ENCODE measurements at regions of chr11 and their contacts with region 1.

Region 1: GRCh38 chr11:128831174-128832120 is 35.6 kb downstream of the KCNJ1 start:
- DNase-seq: peak; percentile 84
- ATAC-seq: peak; percentile 77

Region 2: GRCh38 chr11:128039140-128040021 is 792.1 kb before region 1 on chr11:
- intact Hi-C with region 1: loop called (anchors 10 kb)
- DNase-seq: peak; percentile 71
- ATAC-seq: peak; percentile 63

Region 3: DNA sequence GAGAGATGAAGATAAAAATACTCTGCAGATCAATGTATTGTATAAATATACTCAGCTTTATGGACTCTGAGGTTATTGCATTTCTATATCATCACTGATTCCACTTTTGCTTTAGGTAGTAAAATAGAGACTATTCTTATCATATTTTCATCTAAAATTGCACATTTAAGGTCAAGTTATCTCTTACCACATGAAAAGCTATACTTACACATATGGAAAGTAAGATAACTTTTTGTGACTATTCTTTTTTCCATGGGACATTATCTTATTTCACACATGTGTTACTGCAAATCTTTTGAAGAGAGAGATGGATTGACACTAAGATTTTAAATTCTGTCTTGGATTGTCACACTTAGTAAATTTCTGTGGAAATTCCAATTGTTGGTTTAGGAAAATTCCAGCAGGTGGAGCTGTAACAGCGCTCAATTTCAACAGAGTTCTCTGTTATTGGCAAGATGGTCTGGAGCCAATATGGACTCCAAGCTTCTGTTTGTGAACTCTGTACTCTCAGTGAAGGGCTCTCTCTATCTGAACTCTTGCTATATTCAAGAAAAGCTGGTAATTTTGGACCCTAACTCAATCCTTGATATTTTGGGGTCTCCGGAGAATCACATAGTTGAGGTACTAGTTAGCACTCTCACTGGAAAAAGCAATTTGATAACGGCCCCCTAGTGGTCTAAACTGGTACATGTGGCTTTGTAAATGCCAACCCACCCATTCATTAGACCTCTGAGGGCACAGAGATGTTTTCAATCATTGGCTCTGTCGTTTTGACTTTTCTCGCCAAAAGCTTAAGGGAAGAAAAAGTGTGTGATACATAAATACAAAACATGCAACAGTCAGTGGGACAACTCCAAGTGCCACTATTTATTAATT is 673.8 kb before region 1 on chr11:
- intact Hi-C with region 1: loop called (anchors 5 kb)
- DNase-seq: no peak
- ATAC-seq: peak; percentile 69

Region 4: GRCh38 chr11:128172046-128172878 is 659.2 kb before region 1 on chr11:
- intact Hi-C with region 1: loop called (anchors 1 kb)
- DNase-seq: peak; percentile 75
- ATAC-seq: peak; percentile 76

Region 5: GRCh38 chr11:128630367-128631230 is 200.8 kb before region 1 on chr11:
- intact Hi-C with region 1: loop called (anchors 2 kb)
- DNase-seq: peak; percentile 93
- ATAC-seq: peak; percentile 95

Region 6: GRCh38 chr11:128694618-128695481 is 136.6 kb before region 1 on chr11:
- intact Hi-C with region 1: loop called (anchors 5 kb)
- DNase-seq: peak; percentile 76
- ATAC-seq: peak; percentile 18

Region 7: GRCh38 chr11:128765571-128766549 is 65.6 kb before region 1 on chr11:
- intact Hi-C with region 1: no loop called
- DNase-seq: no peak
- ATAC-seq: no peak

Region 8: GRCh38 chr11:128776424-128777284 is 54.8 kb before region 1 on chr11:
- intact Hi-C with region 1: loop called (anchors 2 kb)
- DNase-seq: peak; percentile 82
- ATAC-seq: peak; percentile 82

Region 9: DNA sequence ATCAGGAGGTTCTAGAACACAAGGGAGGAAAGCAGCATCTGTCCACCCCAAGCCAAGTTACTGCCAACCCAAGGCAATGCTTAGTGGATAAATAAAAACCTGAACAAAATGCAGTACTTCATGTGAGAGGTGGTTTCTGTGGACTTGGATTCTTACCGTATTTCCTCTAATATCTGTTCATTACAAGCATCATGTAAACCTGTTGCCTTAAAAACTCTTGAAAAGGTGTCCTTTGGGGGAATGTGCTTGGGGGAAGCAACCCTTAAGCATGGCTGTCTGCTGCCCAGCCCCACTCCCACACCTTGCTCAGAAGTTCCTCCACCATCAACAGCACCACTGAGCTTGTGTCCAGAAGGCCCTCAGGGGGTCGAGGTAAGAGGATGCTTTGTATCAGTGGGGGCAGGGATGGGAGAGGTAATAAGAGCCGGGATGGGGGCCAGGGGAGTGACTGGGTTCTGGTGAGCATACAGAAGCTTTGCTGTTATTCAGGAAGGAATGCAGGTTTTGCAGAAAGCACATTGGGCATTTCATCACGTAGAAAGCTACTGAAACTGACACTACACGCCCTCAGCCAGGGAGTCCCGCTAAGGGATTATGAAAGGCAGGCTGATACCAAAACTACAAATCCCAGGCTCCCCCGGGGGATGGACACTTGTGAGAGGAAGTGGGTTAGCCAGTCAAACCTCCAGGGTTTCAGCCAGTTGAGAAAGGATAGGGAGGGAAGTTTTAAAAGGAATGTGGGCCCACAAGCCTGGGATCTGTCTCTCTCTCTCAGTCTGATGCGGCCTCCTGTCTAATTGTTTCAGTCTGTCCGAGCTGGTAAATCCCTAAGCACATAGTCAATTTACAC is 16.4 kb before region 1 on chr11:
- intact Hi-C with region 1: no loop called
- DNase-seq: peak; percentile 80
- ATAC-seq: peak; percentile 89

Region 10: GRCh38 chr11:128985880-128986279 is 154.4 kb after region 1 on chr11:
- intact Hi-C with region 1: no loop called
- DNase-seq: no peak
- ATAC-seq: no peak